ENCODE measurements at regions of chr14 and their contacts with region 1.

Region 1: DNA sequence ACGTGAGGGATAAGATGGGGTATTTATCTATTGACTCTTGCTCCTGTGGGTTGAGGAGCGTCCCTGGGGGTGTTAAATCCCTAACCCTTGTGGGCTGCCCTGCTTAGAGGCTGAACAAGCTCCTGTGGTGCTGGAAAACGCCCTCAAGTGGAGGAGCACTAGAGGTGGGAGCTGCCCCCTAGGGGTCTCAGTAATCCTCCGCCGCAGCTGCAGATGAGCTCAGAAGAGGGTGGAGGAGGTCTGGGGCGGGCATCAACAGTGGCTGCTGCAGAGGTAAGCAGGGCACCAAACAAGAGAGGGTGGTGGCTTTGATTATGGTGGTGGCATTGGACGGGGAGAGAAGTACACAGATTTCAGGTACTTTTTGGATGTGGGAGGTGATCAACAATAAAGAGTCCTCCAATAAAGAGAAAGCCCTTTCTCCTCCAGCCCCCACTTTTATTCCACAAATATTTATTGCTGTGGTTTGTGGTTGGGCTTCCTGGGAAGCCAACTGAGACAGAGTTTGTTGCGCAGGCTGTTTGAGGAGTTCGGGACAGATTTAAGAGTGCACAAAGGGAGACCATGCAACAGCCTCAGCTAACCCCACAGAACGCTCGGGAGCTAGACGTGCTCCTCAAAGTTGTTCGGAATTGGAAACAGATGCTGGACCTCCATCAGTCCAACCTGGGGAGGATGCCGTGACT is 179.9 kb downstream of the ADCK1 start:
- DNase-seq: no peak
- H3K4me3 ChIP-seq: peak overlapping the region in 1 of 3 donors; percentile 74
- H3K27ac ChIP-seq: no peak overlapping the region
- H3K4me1 ChIP-seq: no peaks in the 10 kb centered on the region
- H3K27me3 ChIP-seq: no peaks in the 10 kb centered on the region
- CTCF ChIP-seq: no peak
- POLR2A ChIP-seq: no peak

Region 2: GRCh38 chr14:76887196-76887595 is 1092.6 kb before region 1 on chr14:
- intact Hi-C with region 1: no loop called
- DNase-seq: no peak
- H3K4me3 ChIP-seq: no peak overlapping the region
- H3K27ac ChIP-seq: no peak overlapping the region
- H3K4me1 ChIP-seq: no peaks in the 10 kb centered on the region
- H3K27me3 ChIP-seq: no peaks in the 10 kb centered on the region
- CTCF ChIP-seq: no peak
- POLR2A ChIP-seq: no peak

Region 3: DNA sequence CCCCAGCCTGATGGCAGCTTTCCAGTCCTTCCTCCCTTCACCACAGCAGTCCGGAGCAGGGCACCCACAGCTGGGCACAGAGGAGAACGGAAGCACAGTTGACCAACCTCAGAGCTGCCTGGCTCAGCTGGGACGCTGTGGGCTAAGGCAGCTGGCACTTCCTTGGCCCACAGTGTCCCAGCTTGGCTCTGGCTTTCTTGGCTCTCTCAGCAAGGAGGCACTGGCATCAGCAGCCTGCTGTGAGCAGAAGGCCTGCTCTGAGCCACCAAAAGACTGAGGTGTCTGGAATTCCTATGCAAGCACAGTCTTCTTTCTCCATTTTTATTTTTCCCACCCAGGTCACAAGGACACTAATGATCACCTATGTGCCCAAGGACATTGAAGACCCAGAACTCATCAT is 741.5 kb before region 1 on chr14:
- intact Hi-C with region 1: loop called (anchors 10 kb)
- DNase-seq: no peak
- H3K4me3 ChIP-seq: no peak overlapping the region
- H3K27ac ChIP-seq: no peak overlapping the region
- H3K4me1 ChIP-seq: no peaks in the 10 kb centered on the region
- H3K27me3 ChIP-seq: no peaks in the 10 kb centered on the region
- CTCF ChIP-seq: no peak
- POLR2A ChIP-seq: no peak

Region 4: DNA sequence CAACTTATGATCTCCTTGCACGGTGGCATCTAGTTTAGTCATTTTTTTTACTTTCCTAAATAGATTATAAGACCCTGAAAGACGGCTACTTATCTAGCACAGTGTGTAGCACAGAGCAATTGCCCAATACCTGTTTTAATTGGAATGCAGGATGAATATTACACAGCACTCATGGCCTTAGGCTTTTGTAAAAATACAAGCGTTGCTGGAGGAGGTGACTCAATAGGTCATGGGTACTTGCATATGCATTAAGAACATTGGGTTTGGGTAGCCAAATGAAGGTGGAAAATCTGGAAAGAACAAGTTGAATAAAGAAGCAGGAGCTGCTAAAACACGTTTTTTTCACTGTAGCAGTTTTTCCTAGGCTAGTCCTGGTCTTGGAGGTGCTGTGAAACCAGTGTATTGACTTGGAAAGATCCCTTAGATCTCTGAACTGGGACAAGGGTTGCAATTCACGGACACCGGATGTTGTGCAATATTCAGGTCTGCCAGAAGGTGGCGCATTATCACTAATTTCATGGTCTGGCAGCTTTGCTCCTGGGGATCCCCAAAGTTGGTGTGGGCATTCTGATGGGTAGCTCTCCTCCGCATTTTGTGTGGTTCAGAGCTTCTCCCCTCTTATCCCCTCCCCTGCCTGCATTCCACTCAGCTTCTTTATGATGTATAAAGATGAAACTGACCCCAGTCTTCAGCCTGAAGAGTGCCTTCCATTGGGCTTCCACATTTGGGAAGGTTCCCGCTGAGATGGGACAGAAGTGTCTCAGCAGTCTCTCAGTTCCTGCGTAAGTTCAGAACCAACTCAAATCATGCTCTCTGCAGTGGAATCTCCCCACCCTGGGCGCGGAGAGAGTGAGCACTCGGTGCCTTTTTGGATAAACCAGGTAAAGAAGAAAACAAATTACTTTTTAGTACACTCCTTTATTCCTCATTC is 468.6 kb after region 1 on chr14:
- intact Hi-C with region 1: no loop called
- DNase-seq: no peak
- H3K4me3 ChIP-seq: no peak overlapping the region
- H3K27ac ChIP-seq: no peak overlapping the region
- H3K4me1 ChIP-seq: no peaks in the 10 kb centered on the region
- H3K27me3 ChIP-seq: no peaks in the 10 kb centered on the region
- CTCF ChIP-seq: peak in 1 of 3 donors; percentile 22
- POLR2A ChIP-seq: no peak